Common myeloid progenitor, CD34-positive (primary cell): ENCODE measurements at regions of chr9 and their contacts with region 1.

Region 1: DNA sequence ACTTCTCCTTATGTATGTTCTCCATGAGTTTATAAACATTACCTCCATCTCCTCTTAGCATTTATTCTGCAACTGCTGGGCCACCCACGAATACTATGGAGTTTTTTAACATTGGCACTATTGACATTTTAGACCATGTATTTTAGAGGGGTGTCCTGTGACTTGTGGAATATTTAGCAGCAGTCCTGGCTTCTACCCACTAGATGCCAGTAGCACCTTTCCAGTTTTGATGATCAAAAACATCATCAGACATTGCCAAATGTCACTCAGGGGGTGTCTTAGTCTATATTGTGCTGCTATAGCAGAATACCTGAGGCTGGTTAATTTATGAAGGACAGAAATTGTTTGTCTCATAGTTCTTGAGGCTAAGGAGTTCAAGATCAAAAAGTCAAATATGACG is 187.5 kb upstream of the RORB start:
- DNase-seq: peak; percentile 48 to 71 (median 68)
- H3K4me3 ChIP-seq: no peak overlapping the region
- H3K27ac ChIP-seq: no peak overlapping the region
- H3K4me1 ChIP-seq: no peaks in the 10 kb centered on the region
- H3K27me3 ChIP-seq: no peaks in the 10 kb centered on the region

Region 2: GRCh38 chr9:74379718-74380117 is 70.1 kb after region 1 on chr9:
- CTCF ChIA-PET with region 1: interaction called, 40 read pairs
- POLR2A ChIA-PET with region 1: no interaction called
- DNase-seq: peak; percentile 44 to 59 (median 55)
- H3K4me3 ChIP-seq: no peak overlapping the region
- H3K27ac ChIP-seq: no peak overlapping the region
- H3K4me1 ChIP-seq: no peaks in the 10 kb centered on the region
- H3K27me3 ChIP-seq: no peaks in the 10 kb centered on the region